Cardiac septum (tissue), 1 donor: ENCODE measurements at regions of chr1 and their contacts with region 1.

Region 1: GRCh38 chr1:24720152-24720551 is 25.1 kb upstream of the CLIC4 start:
- DNase-seq: peak; percentile 94

Region 2: DNA sequence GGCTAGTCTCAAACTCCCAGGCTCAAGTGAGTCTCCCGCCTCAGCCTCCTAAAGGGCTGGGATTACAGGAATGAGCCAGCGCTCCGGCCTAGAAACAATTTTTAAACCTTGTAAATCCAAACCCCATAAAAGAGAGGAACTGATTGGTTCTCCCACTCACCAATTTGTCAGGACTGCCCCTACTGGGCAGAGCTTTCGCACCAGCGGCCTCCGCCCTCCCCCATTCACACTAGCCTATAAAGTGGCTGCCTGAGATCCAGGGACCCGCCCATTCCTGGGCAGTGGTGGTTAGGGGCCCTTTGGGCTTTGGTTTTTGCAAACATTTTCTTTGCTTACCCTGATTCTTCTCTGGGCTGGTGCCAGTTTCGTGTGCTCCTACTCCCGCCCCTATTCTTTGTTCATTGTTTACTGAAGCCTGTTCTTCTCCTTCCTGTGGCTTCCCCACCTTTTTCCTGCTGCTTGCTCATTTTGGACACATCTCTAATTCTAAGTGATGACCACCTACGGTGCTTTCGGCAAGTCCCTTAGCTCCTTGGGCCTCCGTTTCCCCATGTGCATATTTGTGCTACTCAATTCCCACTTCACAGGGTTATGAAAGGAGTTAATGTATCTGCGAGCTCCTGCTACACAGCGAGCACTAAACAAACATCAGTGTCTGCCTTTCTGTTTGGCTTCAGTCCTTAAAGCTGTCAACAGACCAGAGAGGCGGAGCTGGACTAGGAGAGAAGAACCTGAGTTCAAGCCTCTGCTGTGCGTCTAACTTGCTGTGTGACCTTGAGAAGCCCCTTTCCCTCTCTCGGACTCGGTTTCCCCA is 14.7 kb before region 1 on chr1:
- intact Hi-C with region 1: loop called (anchors 2 kb)
- DNase-seq: peak; percentile 86